Left colon (tissue), 2 donors: ENCODE measurements at regions of chr14 and their contacts with region 1.

Region 1: DNA sequence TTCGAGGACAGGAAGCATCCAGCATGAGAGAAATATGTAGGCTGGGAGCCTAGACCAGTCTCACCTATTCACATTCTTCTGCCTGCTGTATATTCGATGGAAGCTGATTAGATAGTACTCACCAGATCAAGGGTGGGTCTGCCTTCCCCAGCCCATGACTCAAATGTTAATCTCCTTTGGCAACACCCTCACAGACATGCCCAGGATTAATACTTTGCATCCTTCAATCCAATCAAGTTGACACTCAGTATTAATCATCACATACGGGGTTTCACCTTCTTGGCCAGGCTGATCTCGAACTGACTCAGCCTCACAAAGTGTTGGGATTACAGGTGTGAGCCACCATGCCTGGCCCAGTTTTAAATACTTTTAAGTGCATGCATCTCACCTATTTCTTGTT is 30.5 kb upstream of the SLC10A1 start:
- DNase-seq: no peak
- ATAC-seq: no peak

Region 2: GRCh38 chr14:69611201-69612011 is 216.2 kb before region 1 on chr14 and contains the start of gene SUSD6:
- intact Hi-C with region 1: no loop called
- DNase-seq: peak; percentile 93
- ATAC-seq: peak; percentile 72
- total RNA-seq, gene SUSD6: 73.8 to 98.9 TPM

Region 3: GRCh38 chr14:69873877-69874780 is 46.6 kb after region 1 on chr14:
- intact Hi-C with region 1: no loop called
- DNase-seq: no peak
- ATAC-seq: no peak

Region 4: GRCh38 chr14:69887740-69888657 is 60.4 kb after region 1 on chr14:
- intact Hi-C with region 1: no loop called
- DNase-seq: no peak
- ATAC-seq: no peak

Region 5: DNA sequence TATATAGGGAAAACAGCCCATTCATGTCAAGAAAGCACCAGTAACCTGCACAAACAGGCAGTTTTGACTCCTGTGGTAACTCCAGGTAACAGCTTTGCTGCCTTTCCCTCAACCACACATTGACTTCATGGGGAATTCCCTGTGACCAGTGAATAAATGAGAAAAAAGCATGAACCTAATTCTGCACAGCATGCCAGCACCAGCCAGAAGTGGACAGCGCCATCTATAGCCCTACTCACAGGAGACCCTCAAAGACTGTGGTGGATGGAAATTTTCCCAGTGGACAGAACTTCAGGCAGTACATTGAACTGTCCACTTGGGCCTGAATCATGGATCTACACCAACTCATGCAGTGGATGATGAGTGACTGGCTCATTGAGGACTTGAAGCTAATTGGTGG is 209.1 kb after region 1 on chr14:
- intact Hi-C with region 1: loop called in 1 of 2 experiments (anchors 10 kb)
- DNase-seq: no peak
- ATAC-seq: no peak